CD4-positive, alpha-beta T cell (primary cell): ENCODE measurements at regions of chrX and their contacts with region 1.

Region 1: DNA sequence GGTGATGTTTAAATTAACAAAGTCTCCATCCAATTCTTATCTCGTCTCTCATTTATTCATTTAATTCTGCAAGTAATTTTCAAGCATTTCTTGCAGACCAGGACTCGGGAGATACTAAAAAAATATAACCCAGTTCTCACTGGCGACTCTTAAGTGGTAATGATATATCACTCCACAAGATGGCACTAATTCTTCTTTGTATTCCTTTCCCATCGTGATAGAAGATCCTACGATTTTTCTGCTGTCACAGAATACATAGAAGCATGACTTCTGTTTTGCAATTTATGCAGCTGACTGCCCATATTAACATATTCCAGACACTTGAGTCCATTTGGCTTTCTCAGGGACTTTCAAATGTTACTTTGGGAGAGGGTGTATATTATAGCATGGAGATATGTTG is 64.0 kb upstream of the FGF13 start:
- DNase-seq: peak in 1 of 14 experiments; percentile 1
- ATAC-seq: no peak
- H3K4me3 ChIP-seq: no peak overlapping the region
- H3K4me3 Mint-ChIP-seq: no peak overlapping the region
- H3K27ac ChIP-seq: no peak overlapping the region
- H3K27ac Mint-ChIP-seq: no peak overlapping the region
- H3K4me1 ChIP-seq: no peaks in the 10 kb centered on the region
- H3K4me1 Mint-ChIP-seq: no peaks in the 10 kb centered on the region
- H3K27me3 ChIP-seq: no peaks in the 10 kb centered on the region
- H3K27me3 Mint-ChIP-seq: peaks cover 4% of the 10 kb centered on the region
- CTCF ChIP-seq: no peak

Region 2: GRCh38 chrX:138270931-138271330 is 504.6 kb before region 1 on chrX:
- CTCF ChIA-PET with region 1: no interaction called
- POLR2A ChIA-PET with region 1: no interaction called
- intact Hi-C with region 1: no loop called
- DNase-seq: no peak
- ATAC-seq: no peak
- H3K4me3 ChIP-seq: no peak overlapping the region
- H3K4me3 Mint-ChIP-seq: no peak overlapping the region
- H3K27ac ChIP-seq: no peak overlapping the region
- H3K27ac Mint-ChIP-seq: no peak overlapping the region
- H3K4me1 ChIP-seq: no peaks in the 10 kb centered on the region
- H3K4me1 Mint-ChIP-seq: no peaks in the 10 kb centered on the region
- H3K27me3 ChIP-seq: no peaks in the 10 kb centered on the region
- H3K27me3 Mint-ChIP-seq: no peaks in the 10 kb centered on the region
- CTCF ChIP-seq: no peak

Region 3: DNA sequence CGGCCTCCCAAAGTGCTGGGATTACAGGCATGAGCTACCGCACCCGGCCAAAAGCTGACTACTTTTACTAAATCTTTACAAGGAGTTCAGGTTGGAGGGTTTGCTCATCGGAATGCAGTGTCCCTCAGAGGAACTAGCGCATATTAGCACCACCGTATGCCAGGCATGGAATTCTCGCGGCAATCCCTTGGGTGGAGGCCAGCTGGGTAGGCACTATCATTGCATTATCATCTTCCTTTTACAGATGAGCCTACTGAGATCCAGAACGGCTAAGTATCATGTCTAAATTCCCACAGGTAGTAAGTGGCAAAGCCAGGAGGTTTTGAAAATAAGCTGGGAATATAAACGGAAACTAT is 1195.9 kb after region 1 on chrX:
- CTCF ChIA-PET with region 1: no interaction called
- POLR2A ChIA-PET with region 1: no interaction called
- intact Hi-C with region 1: loop called in 1 of 2 experiments (anchors 10 kb)
- DNase-seq: no peak
- ATAC-seq: no peak
- H3K4me3 ChIP-seq: no peak overlapping the region
- H3K4me3 Mint-ChIP-seq: no peak overlapping the region
- H3K27ac ChIP-seq: no peak overlapping the region
- H3K27ac Mint-ChIP-seq: no peak overlapping the region
- H3K4me1 ChIP-seq: no peaks in the 10 kb centered on the region
- H3K4me1 Mint-ChIP-seq: no peaks in the 10 kb centered on the region
- H3K27me3 ChIP-seq: peaks cover 0 to 3% of the 10 kb centered on the region in 2 experiments
- H3K27me3 Mint-ChIP-seq: peaks cover 20% of the 10 kb centered on the region
- CTCF ChIP-seq: no peak